ENCODE measurements at regions of chr4 and their contacts with region 1.

Region 1: DNA sequence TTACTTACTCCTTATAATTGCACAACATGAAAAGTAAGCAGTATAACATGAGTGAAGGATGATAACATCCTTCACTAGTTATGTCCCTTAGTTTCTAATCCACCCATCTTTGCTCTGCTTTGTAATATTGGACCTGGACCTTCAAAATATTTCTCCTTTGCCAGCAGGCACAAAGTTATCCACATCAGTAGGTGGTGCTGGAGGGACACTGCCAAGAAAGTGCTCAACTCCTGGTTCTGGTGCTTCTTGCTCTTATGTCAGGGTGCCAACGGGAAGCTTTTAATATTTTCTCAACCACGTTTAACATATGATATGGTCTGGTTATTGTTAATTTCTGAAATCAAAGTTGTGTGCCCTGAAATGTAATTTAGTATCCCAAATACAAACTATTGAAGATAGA is 49.1 kb downstream of the TMEM165 start:
- DNase-seq: no peak
- H3K4me3 ChIP-seq: no peak overlapping the region
- H3K27ac ChIP-seq: no peak overlapping the region
- H3K4me1 ChIP-seq: peaks cover 8% of the 10 kb centered on the region
- H3K27me3 ChIP-seq: no peaks in the 10 kb centered on the region
- CTCF ChIP-seq: peak; percentile 32 to 64

Region 2: DNA sequence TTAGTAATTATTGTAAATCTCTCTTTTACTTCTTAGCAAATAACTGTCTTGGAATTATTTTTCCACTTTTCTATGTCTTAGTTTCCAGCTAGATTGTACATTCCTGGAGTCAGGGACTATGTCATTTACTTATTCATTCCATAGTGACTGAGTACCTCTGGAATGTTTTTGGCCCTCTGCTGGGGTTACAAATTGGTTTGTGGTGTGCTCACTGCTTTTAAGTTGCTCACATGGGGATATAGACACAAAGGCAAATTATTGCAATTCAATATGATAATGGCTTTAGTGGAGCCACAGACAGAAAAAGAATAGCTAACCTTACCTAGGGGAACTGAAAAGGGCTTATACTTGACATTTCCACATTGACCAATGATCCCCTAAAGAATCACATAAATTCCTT is 1279.4 kb before region 1 on chr4:
- CTCF ChIA-PET with region 1: no interaction called
- dilution Hi-C with region 1: no loop called
- in situ Hi-C with region 1: no loop called
- intact Hi-C with region 1: no loop called
- DNase-seq: peak; percentile 75
- H3K4me3 ChIP-seq: no peak overlapping the region
- H3K27ac ChIP-seq: peak overlapping the region; percentile 18
- H3K4me1 ChIP-seq: peaks cover 19% of the 10 kb centered on the region
- H3K27me3 ChIP-seq: no peaks in the 10 kb centered on the region
- CTCF ChIP-seq: peak in 1 of 2 donors; percentile 40

Region 3: GRCh38 chr4:55554453-55555030 is 109.7 kb after region 1 on chr4:
- CTCF ChIA-PET with region 1: interaction called, 3 read pairs
- dilution Hi-C with region 1: no loop called
- in situ Hi-C with region 1: no loop called
- intact Hi-C with region 1: loop called (anchors 1 kb)
- DNase-seq: no peak
- H3K4me3 ChIP-seq: no peak overlapping the region
- H3K27ac ChIP-seq: no peak overlapping the region
- H3K4me1 ChIP-seq: peaks cover 11% of the 10 kb centered on the region
- H3K27me3 ChIP-seq: no peaks in the 10 kb centered on the region
- CTCF ChIP-seq: peak; percentile 12 to 56

Region 4: GRCh38 chr4:55635741-55636655 is 191.2 kb after region 1 on chr4 and contains the start of gene NMU:
- CTCF ChIA-PET with region 1: no interaction called
- dilution Hi-C with region 1: loop called (anchors 10 kb)
- in situ Hi-C with region 1: no loop called
- intact Hi-C with region 1: loop called (anchors 2 kb)
- DNase-seq: peak; percentile 52
- H3K4me3 ChIP-seq: peak within 1 kb of the TSS; percentile 37 to 63 (median 53)
- H3K27ac ChIP-seq: no peak within 1 kb of the TSS
- H3K4me1 ChIP-seq: peaks cover 10% of the 10 kb centered on the region
- H3K27me3 ChIP-seq: no peaks in the 10 kb centered on the region
- CTCF ChIP-seq: peak in 1 of 2 donors; percentile 38
- total RNA-seq, gene NMU: 1.7 TPM in 1 of 2 donors, not detected in the other

Region 5: DNA sequence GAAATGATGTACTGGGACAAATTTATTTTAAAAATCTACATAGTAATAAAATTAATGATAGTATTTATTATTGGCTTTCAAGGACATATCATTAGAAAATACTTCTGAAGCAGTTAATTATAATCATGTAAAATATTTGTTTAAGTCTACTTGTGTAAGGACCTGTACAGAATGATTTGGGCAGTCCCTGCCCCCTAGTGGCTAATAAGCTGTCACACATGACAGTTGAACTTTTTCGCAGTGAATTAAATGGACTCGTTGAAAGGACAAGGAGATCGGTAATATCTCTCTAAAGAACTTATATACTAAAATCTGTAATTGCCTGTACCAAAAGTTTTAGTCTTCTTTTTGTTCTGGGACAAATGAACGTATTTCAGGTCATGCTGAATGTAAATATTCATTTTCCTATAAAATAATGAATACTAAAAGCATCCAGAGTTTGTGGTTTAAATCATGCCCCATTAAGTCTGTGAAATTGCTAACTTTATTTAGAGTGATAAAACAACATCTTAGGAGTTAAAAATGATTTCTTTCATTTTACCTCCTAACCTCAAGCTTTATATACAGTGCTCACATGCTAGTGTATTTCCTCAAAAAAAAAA is 422.2 kb after region 1 on chr4:
- CTCF ChIA-PET with region 1: interaction called, 20 read pairs
- dilution Hi-C with region 1: no loop called
- in situ Hi-C with region 1: loop called in 1 of 2 experiments (anchors 25 kb)
- intact Hi-C with region 1: loop called (anchors 2 kb)
- DNase-seq: peak; percentile 54
- H3K4me3 ChIP-seq: no peak overlapping the region
- H3K27ac ChIP-seq: peak overlapping the region; percentile 59
- H3K4me1 ChIP-seq: peaks cover 20% of the 10 kb centered on the region
- H3K27me3 ChIP-seq: no peaks in the 10 kb centered on the region
- CTCF ChIP-seq: peak; percentile 82 to 88